ENCODE measurements at regions of chr3 and their contacts with region 1.

Region 1: DNA sequence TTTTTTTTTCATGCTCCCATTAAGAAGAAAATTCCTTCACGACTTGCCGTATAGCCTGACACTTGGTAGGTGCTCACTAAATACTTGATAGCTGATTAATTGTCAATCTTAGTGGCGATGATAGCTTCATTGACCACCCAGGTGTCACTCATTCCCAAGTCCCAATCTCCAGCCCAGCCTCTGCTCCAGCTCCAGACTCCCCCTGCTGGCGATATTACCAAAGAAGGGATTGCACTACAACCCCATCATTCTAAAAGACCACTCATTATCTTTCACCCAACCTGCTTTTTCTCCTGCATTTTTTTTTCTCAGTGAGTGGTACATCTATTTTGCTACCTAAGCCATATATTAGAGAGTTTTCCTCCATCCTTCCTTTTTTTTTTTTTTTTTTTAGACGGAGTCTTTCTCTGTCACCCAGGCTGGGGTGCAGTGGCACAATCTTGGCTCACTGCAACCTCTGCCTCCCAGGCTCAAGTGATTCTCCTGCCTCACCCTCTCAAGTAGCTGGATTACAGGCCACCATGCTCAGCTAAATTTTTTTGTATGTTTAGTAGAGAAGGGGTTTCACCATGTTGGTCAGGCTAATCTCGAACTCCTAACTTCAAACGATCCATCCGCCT is 19.5 kb upstream of the COMMD2 start:
- DNase-seq: peak in 5 of 9 experiments; percentile 24 to 54 (median 34)
- ATAC-seq: peak; percentile 46
- H3K4me3 ChIP-seq: no peak overlapping the region
- H3K4me3 Mint-ChIP-seq: no peak overlapping the region
- H3K27ac ChIP-seq: no peak overlapping the region
- H3K27ac Mint-ChIP-seq: no peak overlapping the region
- H3K4me1 ChIP-seq: no peaks in the 10 kb centered on the region
- H3K4me1 Mint-ChIP-seq: no peaks in the 10 kb centered on the region
- H3K27me3 ChIP-seq: no peaks in the 10 kb centered on the region
- H3K27me3 Mint-ChIP-seq: peaks cover 14% of the 10 kb centered on the region
- CTCF ChIP-seq: peak; percentile 46

Region 2: DNA sequence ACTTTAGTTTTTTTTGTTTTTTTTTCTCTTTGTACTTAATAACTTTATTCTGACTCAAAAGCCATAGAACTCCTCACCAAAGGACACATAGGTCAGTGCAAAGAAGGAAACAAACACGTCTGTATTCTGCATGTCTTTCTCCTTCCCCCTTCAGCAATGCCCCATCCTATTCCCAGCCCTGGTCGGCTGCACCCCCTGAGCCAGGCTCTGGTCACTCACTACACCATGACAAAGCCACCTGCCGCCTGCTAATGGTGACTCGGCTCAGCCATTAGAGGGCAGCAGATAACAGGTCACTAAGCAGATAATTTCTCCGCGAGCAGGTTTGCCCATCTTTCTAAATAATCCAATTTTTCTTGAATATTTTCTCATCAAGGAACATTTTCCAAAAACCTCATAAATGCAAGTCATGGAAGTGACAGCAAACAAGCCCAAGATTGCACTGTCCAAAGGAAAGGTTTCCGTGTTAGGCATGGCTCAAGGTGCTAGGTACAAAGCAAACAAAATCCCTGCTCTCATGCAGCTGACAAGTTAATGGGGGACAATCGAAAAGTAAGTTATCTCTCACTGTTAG is 259.5 kb before region 1 on chr3:
- CTCF ChIA-PET with region 1: interaction called, 7 read pairs
- POLR2A ChIA-PET with region 1: no interaction called
- intact Hi-C with region 1: loop called in 1 of 2 experiments (anchors 5 kb)
- DNase-seq: peak in 5 of 9 experiments; percentile 12 to 56 (median 42)
- ATAC-seq: no peak
- H3K4me3 ChIP-seq: no peak overlapping the region
- H3K4me3 Mint-ChIP-seq: no peak overlapping the region
- H3K27ac ChIP-seq: no peak overlapping the region
- H3K27ac Mint-ChIP-seq: no peak overlapping the region
- H3K4me1 ChIP-seq: no peaks in the 10 kb centered on the region
- H3K4me1 Mint-ChIP-seq: peaks cover 9% of the 10 kb centered on the region
- H3K27me3 ChIP-seq: no peaks in the 10 kb centered on the region
- H3K27me3 Mint-ChIP-seq: peaks cover 17% of the 10 kb centered on the region
- CTCF ChIP-seq: no peak

Region 3: GRCh38 chr3:149572796-149573414 is 198.9 kb before region 1 on chr3:
- CTCF ChIA-PET with region 1: interaction called, 5 read pairs
- POLR2A ChIA-PET with region 1: no interaction called
- intact Hi-C with region 1: loop called (anchors 1 kb)
- DNase-seq: no peak
- ATAC-seq: no peak
- H3K4me3 ChIP-seq: no peak overlapping the region
- H3K4me3 Mint-ChIP-seq: no peak overlapping the region
- H3K27ac ChIP-seq: no peak overlapping the region
- H3K27ac Mint-ChIP-seq: no peak overlapping the region
- H3K4me1 ChIP-seq: no peaks in the 10 kb centered on the region
- H3K4me1 Mint-ChIP-seq: no peaks in the 10 kb centered on the region
- H3K27me3 ChIP-seq: no peaks in the 10 kb centered on the region
- H3K27me3 Mint-ChIP-seq: no peaks in the 10 kb centered on the region
- CTCF ChIP-seq: no peak

Region 4: DNA sequence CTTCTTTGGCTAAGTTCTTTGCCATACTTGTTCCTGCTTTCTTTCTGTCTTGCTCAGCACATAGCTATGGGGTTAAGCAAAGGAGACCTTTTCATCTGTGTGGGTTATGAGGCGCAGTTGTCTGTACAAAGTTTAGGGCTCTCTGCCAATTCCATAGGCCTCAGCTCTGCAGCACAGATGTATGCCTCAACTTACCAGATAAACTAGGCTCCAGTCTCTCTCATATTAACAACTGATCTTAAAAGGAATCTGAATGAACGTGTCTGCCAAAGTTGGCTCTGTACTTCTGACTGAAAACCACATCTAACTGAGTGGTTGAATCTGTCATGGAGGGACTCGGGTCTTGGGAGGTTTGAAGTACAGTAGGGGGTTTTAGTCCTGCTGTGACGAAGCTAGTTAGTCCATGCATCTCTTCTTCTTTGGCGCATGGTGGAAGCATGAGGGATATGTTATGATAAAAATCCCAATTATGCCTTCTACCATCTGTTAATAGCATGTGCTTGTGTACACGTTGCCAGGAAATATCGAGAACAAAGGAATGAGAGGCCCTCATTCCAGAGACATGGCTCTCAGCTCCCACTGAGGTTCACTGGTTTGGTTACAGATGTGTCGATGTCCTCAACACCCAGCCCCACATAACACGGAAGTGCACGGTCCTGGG is 521.8 kb after region 1 on chr3:
- CTCF ChIA-PET with region 1: no interaction called
- POLR2A ChIA-PET with region 1: no interaction called
- intact Hi-C with region 1: no loop called
- DNase-seq: no peak
- ATAC-seq: no peak
- H3K4me3 ChIP-seq: no peak overlapping the region
- H3K4me3 Mint-ChIP-seq: no peak overlapping the region
- H3K27ac ChIP-seq: no peak overlapping the region
- H3K27ac Mint-ChIP-seq: no peak overlapping the region
- H3K4me1 ChIP-seq: no peaks in the 10 kb centered on the region
- H3K4me1 Mint-ChIP-seq: no peaks in the 10 kb centered on the region
- H3K27me3 ChIP-seq: peaks cover 0 to 3% of the 10 kb centered on the region in 2 experiments
- H3K27me3 Mint-ChIP-seq: peaks cover 22% of the 10 kb centered on the region
- CTCF ChIP-seq: no peak